ENCODE measurements at regions of chr11 and their contacts with region 1.

Region 1: GRCh38 chr11:90204832-90205646 is 17.8 kb downstream of the CHORDC1 start:
- DNase-seq: peak; percentile 75
- ATAC-seq: peak; percentile 59
- H3K4me3 ChIP-seq: no peak overlapping the region
- H3K27ac ChIP-seq: no peak overlapping the region
- H3K4me1 ChIP-seq: no peaks in the 10 kb centered on the region
- H3K27me3 ChIP-seq: no peaks in the 10 kb centered on the region
- CTCF ChIP-seq: peak; percentile 94

Region 2: GRCh38 chr11:89529626-89530380 is 675.2 kb before region 1 on chr11:
- CTCF ChIA-PET with region 1: no interaction called
- POLR2A ChIA-PET with region 1: no interaction called
- intact Hi-C with region 1: no loop called
- DNase-seq: no peak
- ATAC-seq: no peak
- H3K4me3 ChIP-seq: no peak overlapping the region
- H3K27ac ChIP-seq: no peak overlapping the region
- H3K4me1 ChIP-seq: no peaks in the 10 kb centered on the region
- H3K27me3 ChIP-seq: no peaks in the 10 kb centered on the region; the same call in 1 of the 2 replicates
- CTCF ChIP-seq: no peak

Region 3: DNA sequence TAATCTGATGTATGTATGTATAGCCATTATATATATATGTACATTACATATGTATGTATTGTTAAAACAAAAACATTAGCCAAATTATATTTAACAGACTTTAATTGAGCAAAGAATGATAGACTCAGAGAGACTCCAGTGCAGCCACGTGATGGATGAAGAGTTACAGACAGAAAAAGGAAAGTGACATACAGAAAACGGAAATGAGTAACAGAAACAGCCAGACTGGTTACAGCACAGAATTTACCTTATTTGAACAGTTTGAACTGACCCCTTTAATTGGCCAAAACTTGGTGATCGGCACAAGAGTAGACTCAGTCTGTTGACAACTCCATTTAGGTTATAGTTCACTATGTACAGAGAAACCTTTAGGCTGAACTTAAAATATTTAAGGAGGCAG is 17.2 kb before region 1 on chr11:
- CTCF ChIA-PET with region 1: no interaction called
- POLR2A ChIA-PET with region 1: no interaction called
- intact Hi-C with region 1: no loop called
- DNase-seq: no peak
- ATAC-seq: no peak
- H3K4me3 ChIP-seq: no peak overlapping the region
- H3K27ac ChIP-seq: no peak overlapping the region
- H3K4me1 ChIP-seq: no peaks in the 10 kb centered on the region
- H3K27me3 ChIP-seq: no peaks in the 10 kb centered on the region
- CTCF ChIP-seq: no peak

Region 4: DNA sequence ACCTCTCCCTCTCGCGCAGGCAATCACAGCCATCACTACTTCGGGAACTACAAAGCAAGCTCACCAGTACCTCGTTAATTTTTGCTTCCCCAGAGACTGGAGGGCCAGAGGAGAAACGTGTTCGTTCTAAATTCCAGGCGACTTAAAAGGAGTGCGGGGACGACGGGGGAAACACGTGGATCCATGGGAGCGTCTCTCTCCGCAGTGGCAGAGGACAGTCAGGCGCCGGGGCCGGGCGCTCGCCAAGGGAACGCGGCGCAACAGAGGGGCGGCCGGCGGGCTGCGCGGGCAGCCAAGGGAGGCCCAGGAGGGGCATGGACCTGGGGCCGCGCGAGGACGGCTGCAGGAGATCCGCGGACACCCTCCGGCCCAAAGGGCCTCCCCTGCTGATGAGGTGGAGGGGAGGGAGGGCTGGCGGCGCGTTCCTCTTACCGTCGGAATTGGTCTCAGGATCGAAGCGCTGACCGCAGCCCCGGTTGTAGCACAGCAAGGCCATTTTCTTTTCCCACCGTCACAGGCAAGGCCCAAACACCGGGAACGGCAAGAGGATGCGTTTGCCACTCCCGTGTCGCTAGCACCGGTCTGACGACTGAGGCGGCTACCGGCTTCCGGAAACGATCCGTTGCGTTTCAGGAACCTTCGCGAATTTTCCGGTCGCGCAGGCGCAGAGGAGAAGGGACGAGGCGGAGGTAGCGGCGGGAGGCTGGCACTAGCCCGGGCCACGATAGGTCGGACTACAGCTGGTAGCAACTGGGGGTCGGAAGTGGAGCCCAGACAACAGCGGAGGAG is 17.6 kb after region 1 on chr11 and contains the start of gene CHORDC1:
- CTCF ChIA-PET with region 1: no interaction called
- POLR2A ChIA-PET with region 1: interaction called, 3 read pairs
- intact Hi-C with region 1: loop called (anchors 2 kb)
- DNase-seq: peak; percentile 95
- ATAC-seq: peak; percentile 86
- H3K4me3 ChIP-seq: peak within 1 kb of the TSS; percentile 95
- H3K27ac ChIP-seq: peak within 1 kb of the TSS; percentile 21
- H3K4me1 ChIP-seq: peaks cover 15% of the 10 kb centered on the region
- H3K27me3 ChIP-seq: no peaks in the 10 kb centered on the region
- CTCF ChIP-seq: no peak
- total RNA-seq, gene CHORDC1: 55.9 and 66.9 TPM in 2 replicates

Region 5: GRCh38 chr11:90250970-90251369 is 45.9 kb after region 1 on chr11:
- CTCF ChIA-PET with region 1: no interaction called
- POLR2A ChIA-PET with region 1: no interaction called
- intact Hi-C with region 1: loop called (anchors 2 kb)
- DNase-seq: no peak
- ATAC-seq: no peak
- H3K4me3 ChIP-seq: no peak overlapping the region
- H3K27ac ChIP-seq: no peak overlapping the region
- H3K4me1 ChIP-seq: no peaks in the 10 kb centered on the region
- H3K27me3 ChIP-seq: peaks cover 47% of the 10 kb centered on the region
- CTCF ChIP-seq: no peak

Measured in PC-3 (cell line).